ENCODE measurements at regions of chr12 and their contacts with region 1.

Region 1: GRCh38 chr12:50390284-50390683 is 6.1 kb downstream of the FAM186A start:
- DNase-seq: no peak
- H3K4me3 ChIP-seq: no peak overlapping the region
- H3K4me3 Mint-ChIP-seq: no peak overlapping the region
- H3K27ac ChIP-seq: no peak overlapping the region
- H3K27ac Mint-ChIP-seq: no peak overlapping the region
- H3K4me1 ChIP-seq: no peaks in the 10 kb centered on the region
- H3K4me1 Mint-ChIP-seq: no peaks in the 10 kb centered on the region
- H3K27me3 ChIP-seq: no peaks in the 10 kb centered on the region
- H3K27me3 Mint-ChIP-seq: no peaks in the 10 kb centered on the region

Region 2: DNA sequence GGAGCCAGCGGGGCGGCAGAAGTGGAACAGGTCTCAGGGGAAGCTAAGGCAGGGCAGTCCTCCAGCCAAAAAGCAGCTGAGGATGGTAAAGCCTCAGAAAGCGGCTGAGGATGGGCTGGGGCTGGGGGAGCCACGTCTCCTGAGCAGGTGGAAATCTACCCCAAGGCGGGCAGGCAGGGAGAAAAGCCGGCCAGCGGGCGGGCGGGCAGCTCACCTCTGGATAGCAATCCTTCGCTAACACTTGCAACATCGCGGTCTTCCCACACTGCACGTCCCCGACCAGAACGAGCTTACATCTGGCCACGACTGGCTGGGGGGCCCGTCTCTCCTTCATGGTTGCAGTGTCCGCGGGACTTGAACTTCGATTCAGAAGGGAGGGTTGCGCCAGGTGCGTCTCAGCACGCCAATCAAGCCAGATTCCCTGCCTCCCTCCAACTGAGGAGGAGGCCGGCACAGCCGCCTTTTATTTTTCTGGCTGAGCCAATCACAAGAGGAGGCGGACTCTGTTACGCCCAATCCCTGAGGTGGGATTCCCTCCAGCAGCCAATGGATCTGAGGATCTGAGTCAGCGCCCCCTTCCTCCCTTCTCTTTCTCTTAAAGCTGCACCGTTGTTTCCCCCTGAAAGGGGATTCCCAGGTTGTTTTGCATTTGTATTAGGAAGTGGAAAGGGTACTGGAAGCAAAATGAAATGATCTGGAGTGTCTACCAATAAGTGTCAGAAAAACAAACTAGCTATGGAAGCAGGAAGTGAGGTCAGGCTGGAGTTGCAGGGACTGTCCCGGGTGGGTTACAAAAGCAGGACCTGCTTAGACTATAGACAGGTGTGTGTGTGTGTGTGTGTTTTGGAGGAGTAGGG is 1524.6 kb before region 1 on chr12 and contains the start of gene RND1:
- CTCF ChIA-PET with region 1: no interaction called
- POLR2A ChIA-PET with region 1: interaction called, 10 read pairs
- DNase-seq: peak; percentile 75 to 90 (median 86)
- H3K4me3 ChIP-seq: peak within 1 kb of the TSS; percentile 84
- H3K4me3 Mint-ChIP-seq: peak within 1 kb of the TSS; percentile 90 to 96 (median 93)
- H3K27ac ChIP-seq: peak within 1 kb of the TSS; percentile 39
- H3K27ac Mint-ChIP-seq: peak within 1 kb of the TSS; percentile 55 to 96 (median 88)
- H3K4me1 ChIP-seq: peaks cover 22% of the 10 kb centered on the region
- H3K4me1 Mint-ChIP-seq: peaks cover 21 to 27% (median 24%) of the 10 kb centered on the region in 3 donors
- H3K27me3 ChIP-seq: peaks cover 22% of the 10 kb centered on the region
- H3K27me3 Mint-ChIP-seq: peaks cover 26 to 30% of the 10 kb centered on the region in 2 donors
- total RNA-seq, gene RND1: 2.0 to 2.6 TPM

Region 3: GRCh38 chr12:50467439-50467838 is 77.2 kb after region 1 on chr12:
- CTCF ChIA-PET with region 1: no interaction called
- POLR2A ChIA-PET with region 1: no interaction called
- DNase-seq: no peak
- H3K4me3 ChIP-seq: no peak overlapping the region
- H3K4me3 Mint-ChIP-seq: no peak overlapping the region
- H3K27ac ChIP-seq: no peak overlapping the region
- H3K27ac Mint-ChIP-seq: peak overlapping the region in 1 of 8 donors; percentile 82
- H3K4me1 ChIP-seq: no peaks in the 10 kb centered on the region
- H3K4me1 Mint-ChIP-seq: no peaks in the 10 kb centered on the region
- H3K27me3 ChIP-seq: no peaks in the 10 kb centered on the region
- H3K27me3 Mint-ChIP-seq: no peaks in the 10 kb centered on the region

Measured in CD8-positive, alpha-beta memory T cell (primary cell).